Activated CD4-positive, alpha-beta memory T cell treated with anti-CD3 and anti-CD28 coated beads for 36 hours (primary cell): ENCODE measurements at regions of chr1 and their contacts with region 1.

Region 1: GRCh38 chr1:186375088-186375953 is at the starts of genes ODR4 and TPR:
- DNase-seq: peak; percentile 98
- H3K4me3 Mint-ChIP-seq: peak within 1 kb of the TSS; percentile 93
- H3K27ac Mint-ChIP-seq: peak within 1 kb of the TSS; percentile 97
- H3K4me1 Mint-ChIP-seq: peaks cover 43% of the 10 kb centered on the region
- H3K27me3 Mint-ChIP-seq: no peaks in the 10 kb centered on the region
- total RNA-seq, gene ODR4: 11.5 to 12.0 TPM
- total RNA-seq, gene TPR: 130 to 131 TPM

Region 2: DNA sequence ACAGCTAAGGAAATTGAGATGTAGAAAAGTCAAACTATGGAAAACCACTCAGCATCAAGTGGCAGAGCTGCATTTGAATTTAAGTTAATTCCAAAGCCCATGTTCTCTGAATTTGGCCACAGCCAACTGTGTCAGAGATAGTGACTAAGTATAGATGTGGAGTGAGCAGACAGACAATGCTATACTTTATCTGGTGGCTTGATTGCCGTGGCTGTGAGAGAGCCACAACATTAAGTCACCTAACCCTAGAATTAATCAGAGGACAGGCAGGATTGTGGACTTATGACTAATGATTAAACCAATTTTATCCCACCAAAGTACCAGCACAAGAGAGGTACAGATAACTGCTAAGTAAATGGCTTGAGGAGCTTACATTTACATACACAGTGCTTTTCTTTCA is 210.0 kb before region 1 on chr1:
- CTCF ChIA-PET with region 1: no interaction called
- POLR2A ChIA-PET with region 1: no interaction called
- intact Hi-C with region 1: no loop called
- DNase-seq: no peak
- H3K4me3 Mint-ChIP-seq: no peak overlapping the region
- H3K27ac Mint-ChIP-seq: no peak overlapping the region
- H3K4me1 Mint-ChIP-seq: no peaks in the 10 kb centered on the region
- H3K27me3 Mint-ChIP-seq: peaks cover 9% of the 10 kb centered on the region

Region 3: DNA sequence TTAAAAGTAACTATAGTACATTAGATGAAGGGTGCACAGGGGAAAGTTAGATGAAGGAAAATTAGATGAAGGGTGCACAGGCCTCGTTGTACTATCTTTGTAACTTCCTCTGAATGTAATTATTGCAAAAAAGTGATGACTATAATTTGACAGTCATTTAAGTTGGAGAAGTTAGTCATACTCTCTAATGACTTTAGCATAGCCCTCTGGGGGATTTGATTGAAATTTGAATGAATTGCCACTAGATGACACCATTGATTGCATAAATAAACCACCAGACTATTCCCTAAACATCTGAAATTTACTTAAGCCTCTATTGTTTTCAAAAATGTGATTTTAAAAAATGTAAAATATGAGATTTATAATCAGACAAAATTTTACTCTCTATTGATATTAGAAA is 102.8 kb before region 1 on chr1:
- CTCF ChIA-PET with region 1: no interaction called
- POLR2A ChIA-PET with region 1: no interaction called
- intact Hi-C with region 1: loop called (anchors 1 kb)
- DNase-seq: no peak
- H3K4me3 Mint-ChIP-seq: no peak overlapping the region
- H3K27ac Mint-ChIP-seq: no peak overlapping the region
- H3K4me1 Mint-ChIP-seq: peaks cover 4% of the 10 kb centered on the region
- H3K27me3 Mint-ChIP-seq: no peaks in the 10 kb centered on the region

Region 4: DNA sequence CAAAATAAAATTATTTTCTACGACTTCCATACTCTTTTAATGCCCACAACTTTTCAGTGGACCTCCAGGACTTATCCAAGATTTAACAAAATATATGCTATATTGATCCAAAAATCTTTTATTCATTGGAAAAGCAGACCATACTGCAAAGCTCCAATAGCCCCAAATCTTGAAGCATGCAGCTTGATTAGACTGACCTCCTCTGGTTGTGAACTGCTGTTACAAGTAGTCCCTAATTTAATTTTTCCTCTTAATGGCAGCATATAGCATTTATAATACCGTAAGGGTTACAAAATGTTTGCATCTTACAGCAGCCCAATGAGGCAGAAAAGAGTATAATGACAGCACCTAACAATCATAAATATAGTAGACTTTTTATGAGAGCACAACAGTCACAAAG is 50.1 kb before region 1 on chr1:
- CTCF ChIA-PET with region 1: interaction called, 5 read pairs
- POLR2A ChIA-PET with region 1: no interaction called
- intact Hi-C with region 1: loop called (anchors 5 kb)
- DNase-seq: no peak
- H3K4me3 Mint-ChIP-seq: no peak overlapping the region
- H3K27ac Mint-ChIP-seq: no peak overlapping the region
- H3K4me1 Mint-ChIP-seq: peaks cover 5% of the 10 kb centered on the region
- H3K27me3 Mint-ChIP-seq: no peaks in the 10 kb centered on the region

Region 5: DNA sequence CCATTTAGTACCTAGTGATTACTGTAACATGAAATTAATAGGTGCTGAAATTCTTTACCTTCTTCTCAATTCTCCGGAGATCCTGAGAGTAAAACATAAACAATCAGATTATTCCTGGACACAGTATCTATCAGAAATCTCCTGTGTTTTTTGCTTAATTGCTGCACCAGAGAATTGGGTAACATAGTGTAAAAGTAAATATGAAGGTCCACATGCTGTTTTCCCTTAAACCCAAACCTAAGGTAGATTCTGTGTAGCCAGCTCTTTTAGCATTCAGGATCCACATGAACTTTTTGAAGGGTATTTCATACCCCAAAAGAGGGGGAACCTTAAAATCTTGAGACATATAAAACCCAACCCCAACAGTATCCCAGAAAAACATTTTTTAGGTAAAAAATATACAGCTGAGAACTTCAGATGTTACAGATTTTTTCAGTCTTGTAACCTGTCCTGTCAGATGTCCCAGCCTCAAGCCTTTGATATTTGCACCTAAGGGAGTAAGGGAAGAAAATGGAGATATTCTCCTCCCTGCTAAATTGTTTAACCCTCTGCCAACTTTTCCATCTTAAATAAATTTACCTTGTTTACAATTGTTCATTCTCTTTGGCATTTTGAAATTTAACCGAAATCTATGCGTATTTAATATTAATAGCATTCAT is 11.5 kb after region 1 on chr1:
- CTCF ChIA-PET with region 1: interaction called, 16 read pairs
- POLR2A ChIA-PET with region 1: no interaction called
- intact Hi-C with region 1: no loop called
- DNase-seq: no peak
- H3K4me3 Mint-ChIP-seq: no peak overlapping the region
- H3K27ac Mint-ChIP-seq: no peak overlapping the region
- H3K4me1 Mint-ChIP-seq: peaks cover 8% of the 10 kb centered on the region
- H3K27me3 Mint-ChIP-seq: no peaks in the 10 kb centered on the region

Region 6: GRCh38 chr1:186442651-186443114 is 67.4 kb after region 1 on chr1:
- CTCF ChIA-PET with region 1: no interaction called
- POLR2A ChIA-PET with region 1: interaction called, 3 read pairs
- intact Hi-C with region 1: loop called (anchors 1 kb)
- DNase-seq: no peak
- H3K4me3 Mint-ChIP-seq: no peak overlapping the region
- H3K27ac Mint-ChIP-seq: no peak overlapping the region
- H3K4me1 Mint-ChIP-seq: peaks cover 15% of the 10 kb centered on the region
- H3K27me3 Mint-ChIP-seq: no peaks in the 10 kb centered on the region